MCF 10A (cell line): ENCODE measurements at regions of chr2 and their contacts with region 1.

Region 1: DNA sequence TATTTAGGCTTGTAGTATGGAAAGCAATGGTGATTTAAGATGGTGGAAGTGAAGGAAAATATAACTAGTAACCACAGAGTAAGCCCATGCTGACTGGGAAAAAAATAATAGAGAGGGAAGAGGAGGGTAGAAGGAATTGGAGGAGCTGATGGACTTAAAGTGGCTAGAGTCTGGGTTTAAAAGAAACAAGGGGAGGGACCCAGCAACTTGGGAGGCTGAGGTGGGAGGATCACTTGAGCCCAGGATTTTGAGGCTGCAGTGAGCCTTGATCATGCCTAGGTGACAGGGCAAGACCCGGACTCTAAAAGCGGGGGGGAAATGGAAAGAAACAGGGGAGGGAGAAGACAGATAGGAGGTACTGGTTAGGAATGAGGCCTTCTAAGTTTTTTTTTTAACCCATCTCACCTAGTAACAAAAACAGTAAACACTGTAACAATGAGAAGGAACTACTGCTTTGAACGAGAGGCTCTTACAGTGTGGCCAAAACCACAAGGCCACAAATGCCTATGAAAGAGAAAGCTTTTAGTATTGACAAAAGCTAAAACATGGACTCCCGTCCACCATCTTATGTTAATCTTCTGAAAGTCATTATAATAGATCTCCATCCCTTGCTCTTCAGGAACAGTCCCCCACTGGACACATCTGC is 26.6 kb downstream of the METTL8 start:
- DNase-seq: no peak
- H3K4me3 Mint-ChIP-seq: no peak overlapping the region
- H3K27ac Mint-ChIP-seq: no peak overlapping the region
- H3K4me1 Mint-ChIP-seq: peaks cover 59% of the 10 kb centered on the region
- H3K27me3 Mint-ChIP-seq: no peaks in the 10 kb centered on the region
- CTCF ChIP-seq: no peak

Region 2: DNA sequence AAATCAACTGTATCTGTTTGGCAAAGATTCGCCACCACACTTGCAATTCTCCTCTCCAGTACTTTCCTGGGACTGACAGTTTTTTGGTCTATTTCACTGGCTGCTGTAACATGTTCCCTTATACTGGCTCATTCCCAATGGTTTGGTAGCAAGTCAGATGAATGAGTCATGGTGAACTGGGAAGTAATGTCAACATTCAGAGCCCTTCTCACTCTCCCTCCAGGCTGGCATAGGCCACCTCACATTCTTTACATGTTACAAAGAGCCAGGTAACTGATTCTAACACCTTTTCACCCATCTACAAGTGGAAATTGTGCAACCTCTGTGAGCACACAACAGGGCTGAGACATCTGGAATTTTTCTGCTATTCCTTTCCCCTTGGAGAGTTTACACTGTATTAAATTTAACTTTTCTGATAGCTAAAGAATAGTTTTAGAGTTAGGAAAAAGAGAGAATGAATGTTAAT is 135.1 kb before region 1 on chr2:
- CTCF ChIA-PET with region 1: interaction called, 4 read pairs
- POLR2A ChIA-PET with region 1: interaction called, 3 read pairs
- intact Hi-C with region 1: loop called (anchors 2 kb)
- DNase-seq: peak; percentile 98
- H3K4me3 Mint-ChIP-seq: peak overlapping the region; percentile 42
- H3K27ac Mint-ChIP-seq: peak overlapping the region; percentile 79
- H3K4me1 Mint-ChIP-seq: peaks cover 19% of the 10 kb centered on the region
- H3K27me3 Mint-ChIP-seq: no peaks in the 10 kb centered on the region
- CTCF ChIP-seq: no peak

Region 3: DNA sequence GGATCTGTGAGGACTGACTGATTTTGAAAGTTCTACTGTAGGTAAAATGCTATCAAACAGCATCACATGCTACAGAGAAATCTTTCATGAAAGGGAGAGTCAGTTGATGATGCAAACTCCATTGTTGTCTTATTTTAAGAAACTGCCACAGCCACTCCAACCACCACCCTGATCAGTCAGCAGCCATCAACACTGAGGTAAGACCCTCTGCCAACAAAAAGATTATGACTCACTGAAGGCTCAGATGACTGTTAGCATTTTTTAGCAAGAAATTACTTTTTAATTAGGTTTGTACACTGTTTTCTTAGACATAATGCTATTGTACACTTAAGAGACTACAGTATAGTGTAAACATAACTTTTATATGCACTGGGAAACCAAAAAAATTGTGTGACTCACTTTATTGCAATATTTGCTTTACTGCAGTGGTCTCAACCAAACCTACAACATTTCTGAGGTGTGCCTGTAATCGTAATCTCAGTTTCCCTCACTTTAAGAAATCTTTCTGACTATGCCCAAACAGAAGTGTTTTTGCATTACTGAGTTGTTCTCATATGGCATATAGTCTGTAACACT is 16.1 kb before region 1 on chr2:
- CTCF ChIA-PET with region 1: interaction called, 3 read pairs
- POLR2A ChIA-PET with region 1: interaction called, 15 read pairs
- intact Hi-C with region 1: no loop called
- DNase-seq: peak; percentile 82
- H3K4me3 Mint-ChIP-seq: no peak overlapping the region
- H3K27ac Mint-ChIP-seq: peak overlapping the region; percentile 6
- H3K4me1 Mint-ChIP-seq: peaks cover 18% of the 10 kb centered on the region
- H3K27me3 Mint-ChIP-seq: no peaks in the 10 kb centered on the region
- CTCF ChIP-seq: no peak

Region 4: GRCh38 chr2:171433763-171434670 is 26.9 kb after region 1 on chr2 and contains the starts of genes DCAF17 and METTL8:
- CTCF ChIA-PET with region 1: interaction called, 4 read pairs
- POLR2A ChIA-PET with region 1: interaction called, 49 read pairs
- intact Hi-C with region 1: no loop called
- DNase-seq: peak; percentile 97
- H3K4me3 Mint-ChIP-seq: peak within 1 kb of the TSS; percentile 98
- H3K27ac Mint-ChIP-seq: peak within 1 kb of the TSS; percentile 93
- H3K4me1 Mint-ChIP-seq: peaks cover 17% of the 10 kb centered on the region
- H3K27me3 Mint-ChIP-seq: no peaks in the 10 kb centered on the region
- CTCF ChIP-seq: peak; percentile 10
- total RNA-seq, gene DCAF17: 20.8 and 21.3 TPM in 2 replicates
- total RNA-seq, gene METTL8: 28.4 and 55.1 TPM in 2 replicates